ENCODE measurements at regions of chr14 and their contacts with region 1.

Region 1: DNA sequence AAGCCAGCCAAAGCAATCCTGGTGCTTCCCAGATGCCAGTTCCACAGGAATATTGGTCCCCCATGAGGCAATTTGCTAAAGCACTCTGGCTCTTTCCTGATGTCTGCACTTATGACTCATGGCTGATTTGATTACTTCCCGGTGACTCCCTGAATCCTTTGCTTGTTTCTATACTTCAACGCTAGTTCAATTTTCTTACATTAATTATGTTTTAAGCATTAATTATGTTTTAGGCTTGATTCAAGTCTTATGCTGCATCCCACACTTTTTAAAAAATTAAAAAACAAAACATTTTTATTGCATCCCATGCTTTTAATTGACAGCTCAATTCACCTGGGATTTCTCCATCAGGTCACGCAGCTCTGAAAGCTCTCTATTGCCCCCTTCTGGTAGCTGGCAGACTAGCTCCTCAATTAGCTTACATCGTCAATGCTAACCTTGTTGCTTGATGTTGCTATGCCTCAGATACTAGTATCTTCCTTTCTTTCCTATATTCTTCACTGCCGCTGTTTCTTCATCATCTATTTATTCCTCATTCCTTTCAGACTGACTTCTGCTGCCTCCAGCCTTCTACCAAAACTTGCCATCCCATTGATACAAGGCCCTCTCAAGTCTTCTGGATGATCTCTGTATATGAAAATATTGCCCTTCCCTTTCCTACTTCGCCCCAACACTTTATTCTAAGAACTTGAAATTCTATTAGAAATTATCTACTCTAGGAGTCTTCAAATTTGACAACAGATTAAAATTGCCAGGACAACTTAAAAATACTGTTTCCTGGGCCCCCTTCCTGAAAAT is 32.0 kb downstream of the TSHR start:
- DNase-seq: peak; percentile 83
- H3K4me3 Mint-ChIP-seq: no peak overlapping the region
- H3K27ac Mint-ChIP-seq: no peak overlapping the region
- H3K4me1 Mint-ChIP-seq: no peaks in the 10 kb centered on the region
- H3K27me3 Mint-ChIP-seq: peaks cover 21% of the 10 kb centered on the region
- CTCF ChIP-seq: peak; percentile 95

Region 2: GRCh38 chr14:80862983-80863382 is 124.5 kb before region 1 on chr14:
- CTCF ChIA-PET with region 1: interaction called, 4 read pairs
- POLR2A ChIA-PET with region 1: no interaction called
- intact Hi-C with region 1: loop called (anchors 5 kb)
- DNase-seq: no peak
- H3K4me3 Mint-ChIP-seq: no peak overlapping the region
- H3K27ac Mint-ChIP-seq: no peak overlapping the region
- H3K4me1 Mint-ChIP-seq: no peaks in the 10 kb centered on the region
- H3K27me3 Mint-ChIP-seq: no peaks in the 10 kb centered on the region
- CTCF ChIP-seq: peak; percentile 27

Region 3: GRCh38 chr14:80954687-80955299 is 32.6 kb before region 1 on chr14:
- CTCF ChIA-PET with region 1: interaction called, 140 read pairs
- POLR2A ChIA-PET with region 1: interaction called, 3 read pairs
- intact Hi-C with region 1: loop called (anchors 1 kb)
- DNase-seq: peak; percentile 75
- H3K4me3 Mint-ChIP-seq: peak overlapping the region; percentile 70
- H3K27ac Mint-ChIP-seq: no peak overlapping the region
- H3K4me1 Mint-ChIP-seq: no peaks in the 10 kb centered on the region
- H3K27me3 Mint-ChIP-seq: peaks cover 76% of the 10 kb centered on the region
- CTCF ChIP-seq: peak; percentile 76

Region 4: GRCh38 chr14:80973931-80974641 is 13.3 kb before region 1 on chr14:
- CTCF ChIA-PET with region 1: interaction called, 124 read pairs
- POLR2A ChIA-PET with region 1: interaction called, 5 read pairs
- intact Hi-C with region 1: no loop called
- DNase-seq: peak; percentile 16
- H3K4me3 Mint-ChIP-seq: no peak overlapping the region
- H3K27ac Mint-ChIP-seq: no peak overlapping the region
- H3K4me1 Mint-ChIP-seq: no peaks in the 10 kb centered on the region
- H3K27me3 Mint-ChIP-seq: peaks cover 50% of the 10 kb centered on the region
- CTCF ChIP-seq: no peak

Region 5: GRCh38 chr14:81042438-81042837 is 55.0 kb after region 1 on chr14:
- CTCF ChIA-PET with region 1: no interaction called
- POLR2A ChIA-PET with region 1: no interaction called
- intact Hi-C with region 1: no loop called
- DNase-seq: no peak
- H3K4me3 Mint-ChIP-seq: no peak overlapping the region
- H3K27ac Mint-ChIP-seq: no peak overlapping the region
- H3K4me1 Mint-ChIP-seq: no peaks in the 10 kb centered on the region
- H3K27me3 Mint-ChIP-seq: peaks cover 13% of the 10 kb centered on the region
- CTCF ChIP-seq: no peak

Region 6: GRCh38 chr14:81164167-81164774 is 176.8 kb after region 1 on chr14:
- CTCF ChIA-PET with region 1: interaction called, 37 read pairs
- POLR2A ChIA-PET with region 1: no interaction called
- intact Hi-C with region 1: no loop called
- DNase-seq: peak; percentile 87
- H3K4me3 Mint-ChIP-seq: no peak overlapping the region
- H3K27ac Mint-ChIP-seq: no peak overlapping the region
- H3K4me1 Mint-ChIP-seq: peaks cover 14% of the 10 kb centered on the region
- H3K27me3 Mint-ChIP-seq: no peaks in the 10 kb centered on the region
- CTCF ChIP-seq: peak; percentile 69

Region 7: GRCh38 chr14:81565441-81566290 is 578.2 kb after region 1 on chr14:
- CTCF ChIA-PET with region 1: no interaction called
- POLR2A ChIA-PET with region 1: no interaction called
- intact Hi-C with region 1: no loop called
- DNase-seq: peak; percentile 48
- H3K4me3 Mint-ChIP-seq: no peak overlapping the region
- H3K27ac Mint-ChIP-seq: no peak overlapping the region
- H3K4me1 Mint-ChIP-seq: peaks cover 6% of the 10 kb centered on the region
- H3K27me3 Mint-ChIP-seq: peaks cover 31% of the 10 kb centered on the region
- CTCF ChIP-seq: peak; percentile 60